BJ (cell line): ENCODE measurements at regions of chr2 and their contacts with region 1.

Region 1: DNA sequence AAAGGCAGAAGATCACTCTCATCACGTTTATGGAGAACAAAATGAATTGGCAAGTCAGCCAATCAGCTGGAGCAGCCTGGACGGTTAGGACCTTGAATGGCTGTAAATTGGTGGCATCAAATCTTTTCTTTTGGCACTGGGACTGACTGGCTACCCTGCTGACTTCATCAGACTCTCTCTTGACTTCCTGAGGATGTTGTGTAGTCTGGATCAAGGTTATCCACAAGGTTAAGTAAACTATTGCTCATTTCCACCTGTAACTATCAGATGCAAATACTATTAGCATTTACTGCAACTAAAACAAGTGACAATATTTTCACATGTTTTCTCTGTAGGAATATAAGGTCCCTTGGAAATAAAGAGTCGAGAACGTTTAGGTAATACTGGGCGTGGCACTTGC is 134.3 kb upstream of the RASGRP3 start:
- DNase-seq: no peak
- H3K4me3 ChIP-seq: no peak overlapping the region
- H3K27me3 ChIP-seq: no peaks in the 10 kb centered on the region
- CTCF ChIP-seq: no peak

Region 2: DNA sequence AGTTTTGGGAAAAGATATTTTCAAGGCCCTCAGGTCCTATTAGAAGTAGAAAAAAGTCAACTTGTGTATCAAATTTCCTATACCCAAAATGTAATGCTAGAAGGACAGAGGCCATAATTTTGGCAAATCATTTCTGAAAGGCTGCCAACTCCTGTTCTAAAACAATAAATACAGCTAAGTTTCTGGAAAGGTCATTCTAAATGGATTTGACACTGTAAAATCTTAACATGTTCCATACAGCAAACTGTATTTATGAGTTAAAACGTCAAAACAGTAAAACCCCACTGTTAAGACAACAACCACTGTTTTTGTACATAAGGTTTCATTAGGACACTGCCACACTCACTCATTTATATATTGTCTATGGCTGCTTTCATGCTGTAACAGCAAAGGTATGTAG is 247.3 kb after region 1 on chr2:
- CTCF ChIA-PET with region 1: no interaction called
- POLR2A ChIA-PET with region 1: interaction called, 14 read pairs
- DNase-seq: no peak
- H3K4me3 ChIP-seq: no peak overlapping the region
- H3K27me3 ChIP-seq: no peaks in the 10 kb centered on the region
- CTCF ChIP-seq: no peak